Sciatic nerve (tissue), 2 donors: ENCODE measurements at regions of chr15 and their contacts with region 1.

Region 1: DNA sequence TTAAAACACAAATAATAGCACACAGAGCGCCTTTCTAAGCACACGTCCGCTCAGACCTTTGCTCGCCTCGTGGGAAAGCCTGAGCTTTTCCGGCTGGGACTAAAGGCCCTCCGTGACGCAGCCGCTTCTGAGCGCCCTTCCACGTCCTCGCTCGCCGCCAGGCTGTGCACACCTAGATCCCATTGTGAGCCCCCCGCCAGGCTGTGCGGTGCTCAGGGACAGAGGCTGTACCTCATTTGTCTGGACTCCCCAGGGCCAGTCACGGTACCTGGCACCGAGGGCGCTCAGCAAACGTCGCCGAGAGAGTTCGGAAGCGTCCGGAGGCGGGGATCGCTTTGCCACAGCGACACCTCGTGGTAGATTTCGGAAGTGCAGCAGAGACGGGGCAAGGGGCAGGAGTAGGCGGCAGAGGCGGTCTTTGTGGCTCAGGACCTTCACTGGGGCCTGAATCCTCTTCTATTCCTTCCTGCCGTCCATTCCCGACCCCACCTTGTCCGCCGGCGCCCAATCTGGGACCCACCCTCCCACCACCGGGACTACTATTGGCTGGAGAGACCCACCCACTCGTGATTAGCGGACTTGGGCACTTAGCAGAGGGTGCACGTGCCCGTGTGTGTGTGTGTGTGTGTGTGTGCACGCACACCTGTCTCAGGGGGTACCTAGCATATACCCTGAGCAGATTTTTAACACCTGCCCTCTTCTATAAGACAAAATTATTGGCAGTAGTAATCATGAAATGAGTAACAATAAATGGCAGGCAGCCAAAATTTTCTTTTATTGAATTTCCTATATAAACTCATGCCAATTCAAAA is 65.6 kb downstream of the RHCG start:
- DNase-seq: peak; percentile 95
- ATAC-seq: peak; percentile 90

Region 2: DNA sequence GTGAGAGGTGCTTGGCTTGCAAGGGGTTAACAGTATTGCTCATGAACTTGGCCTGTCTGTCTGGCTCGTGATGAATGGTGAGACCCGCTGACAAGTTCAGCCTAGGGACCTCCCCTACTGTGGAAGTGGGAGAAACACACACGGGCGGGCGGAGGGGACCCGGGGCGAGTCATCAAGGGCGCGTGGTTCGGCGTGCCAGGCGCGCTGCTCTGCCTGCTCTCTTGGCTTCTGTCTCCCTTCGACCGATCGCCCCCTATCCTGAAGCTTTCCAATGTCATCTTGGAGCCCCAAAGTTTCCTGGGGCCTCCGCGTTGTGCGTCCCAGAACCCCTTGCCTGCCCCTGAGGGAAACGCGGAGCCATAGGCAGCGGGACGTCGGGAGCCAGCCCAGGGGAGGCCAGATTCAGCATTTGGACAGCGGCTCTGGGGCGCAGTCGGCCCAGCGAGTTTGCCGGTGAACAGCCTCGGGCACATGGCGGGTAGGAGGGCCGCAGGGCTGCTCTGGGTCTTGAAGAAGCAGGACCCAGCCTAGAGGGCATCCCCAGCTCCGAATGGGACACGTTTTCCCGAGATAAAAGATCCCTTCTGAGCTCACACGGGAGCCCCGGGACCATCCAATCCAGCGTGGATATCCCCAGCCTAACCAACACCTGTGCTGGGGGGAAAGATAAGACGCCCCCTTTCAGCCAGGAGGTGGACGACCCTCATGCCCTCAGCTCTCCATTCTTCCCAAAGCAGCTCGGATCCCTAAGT is 69.1 kb before region 1 on chr15:
- intact Hi-C with region 1: loop called (anchors 5 kb)
- DNase-seq: peak; percentile 84
- ATAC-seq: peak; percentile 56

Region 3: GRCh38 chr15:89496155-89497098 is 65.7 kb after region 1 on chr15 and contains the start of gene RHCG:
- intact Hi-C with region 1: loop called (anchors 10 kb)
- DNase-seq: peak; percentile 55
- ATAC-seq: no peak
- total RNA-seq, gene RHCG: not detected